Activated CD4-positive, alpha-beta memory T cell treated with anti-CD3 and anti-CD28 coated beads for 36 hours (primary cell): ENCODE measurements at regions of chr5 and their contacts with region 1.

Region 1: DNA sequence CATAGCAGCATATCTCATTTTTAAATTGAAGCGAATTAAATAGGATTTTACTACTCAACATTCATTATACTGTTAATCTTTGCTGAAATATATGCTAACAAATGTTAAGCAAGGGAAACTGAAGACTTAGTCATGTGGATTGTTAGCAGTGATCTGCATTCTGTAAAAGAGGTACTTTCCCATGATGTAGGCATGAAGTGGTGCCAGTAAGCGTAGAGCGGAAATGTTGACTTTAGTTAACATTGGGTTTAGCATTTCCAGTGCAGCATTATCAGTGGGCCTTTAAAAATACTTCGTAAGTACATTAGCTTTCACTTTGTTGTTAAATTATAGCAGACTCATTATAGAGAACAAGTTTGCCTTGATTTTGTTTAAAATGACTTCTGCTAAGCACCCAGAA is 130.3 kb downstream of the CDC42SE2 start:
- DNase-seq: peak; percentile 69
- H3K4me3 Mint-ChIP-seq: peak overlapping the region; percentile 66
- H3K27ac Mint-ChIP-seq: peak overlapping the region; percentile 93
- H3K4me1 Mint-ChIP-seq: peaks cover 86% of the 10 kb centered on the region
- H3K27me3 Mint-ChIP-seq: no peaks in the 10 kb centered on the region

Region 2: GRCh38 chr5:131165119-131165727 is 228.9 kb before region 1 on chr5 and contains the start of gene HINT1:
- CTCF ChIA-PET with region 1: interaction called, 4 read pairs
- POLR2A ChIA-PET with region 1: interaction called, 11 read pairs
- intact Hi-C with region 1: loop called (anchors 1 kb)
- DNase-seq: peak; percentile 95
- H3K4me3 Mint-ChIP-seq: peak within 1 kb of the TSS; percentile 98
- H3K27ac Mint-ChIP-seq: peak within 1 kb of the TSS; percentile 99
- H3K4me1 Mint-ChIP-seq: peaks cover 45% of the 10 kb centered on the region
- H3K27me3 Mint-ChIP-seq: no peaks in the 10 kb centered on the region
- total RNA-seq, gene HINT1: 349 to 361 TPM

Region 3: DNA sequence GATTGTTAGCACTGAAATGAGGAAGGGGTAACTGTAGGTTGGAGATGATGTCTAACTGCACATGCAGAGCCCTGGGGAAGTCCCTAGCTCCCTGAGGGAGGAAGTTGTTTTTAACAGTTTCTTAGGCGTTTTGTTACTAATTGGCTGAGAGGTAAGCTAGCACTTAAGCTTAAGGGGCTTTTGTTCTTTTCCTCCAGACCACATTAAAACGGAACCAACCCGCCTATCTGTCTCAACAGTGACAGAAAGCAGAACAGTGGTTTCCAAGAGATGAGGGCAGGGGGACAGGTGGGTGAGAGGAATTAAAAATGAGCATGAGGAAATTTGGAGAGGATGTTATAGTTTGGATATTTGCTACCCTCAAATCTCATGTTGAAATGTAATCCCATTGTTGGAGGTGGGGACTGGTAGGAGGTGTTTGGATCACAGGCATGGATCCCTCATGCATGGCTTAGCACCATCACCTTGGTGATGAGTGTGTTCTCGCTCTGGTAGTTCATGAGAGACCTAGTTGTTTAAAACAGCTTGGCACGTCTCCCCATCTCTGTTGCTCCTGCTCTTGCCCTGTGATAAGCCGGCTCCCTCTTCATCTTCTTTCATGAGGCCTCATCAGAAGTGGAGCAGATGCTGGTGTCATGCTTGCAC is 184.5 kb before region 1 on chr5:
- CTCF ChIA-PET with region 1: no interaction called
- POLR2A ChIA-PET with region 1: no interaction called
- intact Hi-C with region 1: loop called (anchors 5 kb)
- DNase-seq: peak; percentile 65
- H3K4me3 Mint-ChIP-seq: peak overlapping the region; percentile 71
- H3K27ac Mint-ChIP-seq: peak overlapping the region; percentile 95
- H3K4me1 Mint-ChIP-seq: peaks cover 49% of the 10 kb centered on the region
- H3K27me3 Mint-ChIP-seq: no peaks in the 10 kb centered on the region

Region 4: GRCh38 chr5:131289738-131290137 is 104.4 kb before region 1 on chr5:
- CTCF ChIA-PET with region 1: interaction called, 4 read pairs
- POLR2A ChIA-PET with region 1: no interaction called
- intact Hi-C with region 1: loop called (anchors 1 kb)
- DNase-seq: peak; percentile 62
- H3K4me3 Mint-ChIP-seq: peak overlapping the region; percentile 75
- H3K27ac Mint-ChIP-seq: peak overlapping the region; percentile 97
- H3K4me1 Mint-ChIP-seq: peaks cover 69% of the 10 kb centered on the region
- H3K27me3 Mint-ChIP-seq: no peaks in the 10 kb centered on the region

Region 5: DNA sequence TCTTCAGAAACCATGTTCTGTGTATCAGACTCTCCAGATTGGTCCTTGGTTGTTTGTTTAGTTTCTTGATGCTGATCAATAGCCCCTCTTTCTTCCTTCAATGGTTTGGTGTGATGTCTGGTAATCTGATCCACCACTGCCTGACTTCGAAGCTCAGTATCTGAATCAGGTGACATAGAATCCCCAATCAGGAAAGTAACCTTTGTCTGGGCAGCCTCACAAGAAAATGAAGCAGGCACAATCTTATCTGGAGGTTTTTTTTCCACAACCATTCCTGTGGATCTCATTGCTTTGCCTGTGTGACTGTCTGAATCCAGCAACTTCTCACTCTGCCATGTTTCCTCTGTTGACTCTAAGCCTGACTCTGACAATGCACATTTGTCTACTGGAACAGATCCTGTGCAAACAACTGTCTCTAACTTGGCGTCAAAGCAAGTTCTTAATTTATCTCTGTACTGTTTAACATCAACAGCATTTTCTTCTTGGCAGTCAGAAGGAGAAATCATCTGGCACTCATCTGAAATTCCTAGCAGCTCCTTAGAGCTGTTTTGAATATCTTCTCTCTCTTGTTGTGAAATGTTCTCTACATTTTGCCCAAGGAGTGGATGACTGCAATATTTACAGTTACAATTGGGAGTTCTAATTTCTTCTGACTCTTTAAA is 278.0 kb after region 1 on chr5:
- CTCF ChIA-PET with region 1: no interaction called
- POLR2A ChIA-PET with region 1: no interaction called
- intact Hi-C with region 1: no loop called
- DNase-seq: no peak
- H3K4me3 Mint-ChIP-seq: no peak overlapping the region
- H3K27ac Mint-ChIP-seq: no peak overlapping the region
- H3K4me1 Mint-ChIP-seq: peaks cover 25% of the 10 kb centered on the region
- H3K27me3 Mint-ChIP-seq: no peaks in the 10 kb centered on the region